A549 (cell line): ENCODE measurements at regions of chr19 and their contacts with region 1.

Region 1: DNA sequence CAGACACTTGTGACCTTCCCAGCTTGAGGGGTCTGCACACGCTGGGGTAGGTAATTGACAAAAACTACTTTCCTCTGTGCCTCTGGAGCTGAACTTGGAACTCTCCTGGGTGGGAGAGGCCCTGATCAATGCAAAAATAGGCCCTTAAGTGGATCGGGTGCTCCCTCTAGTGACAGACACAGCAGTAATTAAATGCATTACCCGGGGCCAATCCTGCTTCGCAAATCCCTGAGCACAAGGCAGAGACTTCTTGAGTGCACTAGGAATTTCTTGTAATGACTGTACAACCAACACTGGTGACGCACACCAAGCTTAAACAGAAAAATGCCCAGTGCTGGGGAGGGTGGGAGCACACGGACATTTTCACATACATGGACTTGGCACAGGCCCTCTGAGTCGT is 10.6 kb upstream of the UBE2S start:
- DNase-seq: peak; percentile 88 to 91
- ATAC-seq: peak; percentile 94 to 95
- H3K4me3 ChIP-seq: no peak overlapping the region
- H3K27ac ChIP-seq: peak overlapping the region in 1 of 2 experiments; percentile 6; a peak in 1 of 6 replicates
- H3K4me1 ChIP-seq: peaks cover 8% of the 10 kb centered on the region; the same call in 1 of the 3 replicates
- CTCF ChIP-seq: peak; percentile 95
- EP300 ChIP-seq: no peak
- POLR2A ChIP-seq: no peak
- RAD21 ChIP-seq: peak; percentile 97 to 99

Region 2: GRCh38 chr19:55160128-55160985 is 257.8 kb before region 1 on chr19:
- CTCF ChIA-PET with region 1: interaction called, 32 read pairs
- POLR2A ChIA-PET with region 1: interaction called, 6 read pairs
- DNase-seq: peak; percentile 95 to 98
- ATAC-seq: peak; percentile 66 to 85
- H3K4me3 ChIP-seq: 0 out of 3 replicates have a peak overlapping the region, but pooled peaks have one; percentile 10
- H3K27ac ChIP-seq: peak overlapping the region in 1 of 2 experiments; percentile 69; a peak in 3 of 6 replicates
- H3K4me1 ChIP-seq: peaks cover 22% of the 10 kb centered on the region
- CTCF ChIP-seq: peak; percentile 98
- EP300 ChIP-seq: no peak
- POLR2A ChIP-seq: no peak
- RAD21 ChIP-seq: peak; percentile 90

Region 3: GRCh38 chr19:55227241-55228014 is 190.8 kb before region 1 on chr19:
- CTCF ChIA-PET with region 1: interaction called, 11 read pairs
- POLR2A ChIA-PET with region 1: no interaction called
- DNase-seq: no peak
- ATAC-seq: peak in 1 of 2 experiments; percentile 5; a peak in 3 of 6 replicates
- H3K4me3 ChIP-seq: no peak overlapping the region
- H3K27ac ChIP-seq: no peak overlapping the region
- H3K4me1 ChIP-seq: peaks cover 19% of the 10 kb centered on the region
- CTCF ChIP-seq: no peak
- EP300 ChIP-seq: no peak
- POLR2A ChIP-seq: no peak
- RAD21 ChIP-seq: no peak

Region 4: GRCh38 chr19:55301459-55302317 is 116.5 kb before region 1 on chr19:
- CTCF ChIA-PET with region 1: interaction called, 35 read pairs
- POLR2A ChIA-PET with region 1: no interaction called
- DNase-seq: peak; percentile 82 to 100
- ATAC-seq: peak; percentile 72 to 88
- H3K4me3 ChIP-seq: peak overlapping the region; percentile 54
- H3K27ac ChIP-seq: peak overlapping the region; percentile 87 to 88
- H3K4me1 ChIP-seq: peaks cover 6% of the 10 kb centered on the region; the same call in 2 of the 3 replicates
- CTCF ChIP-seq: peak; percentile 99
- EP300 ChIP-seq: no peak
- POLR2A ChIP-seq: peak; percentile 56
- RAD21 ChIP-seq: peak; percentile 83 to 92

Region 5: DNA sequence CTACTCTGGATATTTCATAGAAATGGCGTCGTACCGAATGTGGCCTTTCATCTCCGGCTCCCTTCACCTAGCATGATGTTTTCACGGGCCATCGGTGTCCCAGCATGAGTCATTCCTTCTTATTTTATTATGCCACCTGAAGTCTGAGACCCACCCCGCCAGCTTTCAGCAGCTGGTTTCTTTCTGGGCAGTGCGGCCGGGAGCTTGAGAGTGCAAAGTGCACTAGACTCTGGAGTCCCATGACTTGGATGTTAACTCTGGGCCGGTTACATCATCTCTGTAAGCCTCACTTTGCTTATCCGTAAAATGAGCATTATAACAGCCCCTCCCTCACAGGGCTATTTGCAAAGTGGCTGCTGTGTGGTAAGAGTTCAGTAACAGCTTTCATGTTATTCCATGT is 84.3 kb before region 1 on chr19:
- CTCF ChIA-PET with region 1: no interaction called
- POLR2A ChIA-PET with region 1: no interaction called
- DNase-seq: no peak
- ATAC-seq: no peak
- H3K4me3 ChIP-seq: no peak overlapping the region
- H3K27ac ChIP-seq: peak overlapping the region in 1 of 2 experiments; percentile 20; a peak in 3 of 6 replicates
- H3K4me1 ChIP-seq: peaks cover 10% of the 10 kb centered on the region
- CTCF ChIP-seq: no peak
- EP300 ChIP-seq: no peak
- POLR2A ChIP-seq: no peak
- RAD21 ChIP-seq: no peak

Region 6: GRCh38 chr19:55407800-55408532 is 10.2 kb before region 1 on chr19:
- CTCF ChIA-PET with region 1: interaction called, 61 read pairs
- POLR2A ChIA-PET with region 1: interaction called, 18 read pairs
- DNase-seq: peak; percentile 100
- ATAC-seq: peak; percentile 90 to 96
- H3K4me3 ChIP-seq: peak overlapping the region; percentile 98
- H3K27ac ChIP-seq: peak overlapping the region; percentile 95 to 97
- H3K4me1 ChIP-seq: peaks cover 36% of the 10 kb centered on the region
- CTCF ChIP-seq: no peak
- EP300 ChIP-seq: no peak
- POLR2A ChIP-seq: no peak
- RAD21 ChIP-seq: no peak

Region 7: DNA sequence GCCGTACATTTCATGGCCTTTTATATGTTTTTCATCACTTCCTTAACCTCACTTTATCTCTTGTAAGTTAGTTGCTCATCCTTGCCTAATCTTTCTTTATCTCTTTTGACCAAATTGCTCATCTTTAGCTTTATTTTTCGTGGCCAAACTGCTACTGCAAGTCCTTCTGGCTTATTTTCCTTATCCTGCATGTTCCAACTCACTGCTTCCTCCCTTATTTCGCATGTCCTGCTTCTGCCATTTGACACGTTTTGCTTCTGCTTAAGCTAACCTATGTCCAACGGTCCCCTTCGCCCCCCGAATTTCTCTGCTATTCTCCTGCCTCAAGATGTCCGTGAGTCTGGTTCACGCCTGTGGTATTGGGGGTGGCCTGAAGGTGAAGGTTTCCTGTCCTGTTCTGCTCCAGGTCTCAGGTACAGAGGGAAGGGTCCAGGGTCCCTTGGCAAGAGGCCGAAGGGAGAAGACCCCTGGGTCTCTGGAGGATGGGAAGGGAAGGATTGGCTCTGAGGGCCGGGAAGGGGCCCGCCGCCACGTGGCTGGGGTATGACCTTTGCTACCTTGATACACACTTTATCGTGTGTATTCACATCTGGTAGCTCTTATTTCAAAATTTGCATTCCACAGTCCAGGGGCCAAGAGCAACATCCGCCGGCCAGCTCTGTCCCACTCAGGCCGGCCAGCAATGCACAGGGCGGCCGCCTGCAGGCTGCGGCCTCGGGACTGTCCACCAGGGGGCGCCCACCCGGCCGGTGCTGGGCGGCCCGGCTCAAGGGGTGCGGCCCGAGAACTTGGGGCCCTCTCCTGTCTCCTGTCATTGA is 49.3 kb after region 1 on chr19:
- CTCF ChIA-PET with region 1: interaction called, 12 read pairs
- POLR2A ChIA-PET with region 1: interaction called, 4 read pairs
- DNase-seq: peak; percentile 48 to 73
- ATAC-seq: peak; percentile 75 to 93
- H3K4me3 ChIP-seq: no peak overlapping the region
- H3K27ac ChIP-seq: peak overlapping the region; percentile 6 to 35; a peak in 3 of 6 replicates
- H3K4me1 ChIP-seq: peaks cover 6% of the 10 kb centered on the region; the same call in 2 of the 3 replicates
- CTCF ChIP-seq: peak; percentile 99
- EP300 ChIP-seq: no peak
- POLR2A ChIP-seq: no peak
- RAD21 ChIP-seq: peak; percentile 57 to 73